MCF 10A (cell line): ENCODE measurements at regions of chr3 and their contacts with region 1.

Region 1: GRCh38 chr3:179108086-179108485 is 36.5 kb upstream of the ZMAT3 start:
- DNase-seq: no peak
- H3K4me3 Mint-ChIP-seq: no peak overlapping the region
- H3K27ac Mint-ChIP-seq: no peak overlapping the region
- H3K4me1 Mint-ChIP-seq: no peaks in the 10 kb centered on the region
- H3K27me3 Mint-ChIP-seq: no peaks in the 10 kb centered on the region
- CTCF ChIP-seq: no peak

Region 2: GRCh38 chr3:179083977-179084376 is 24.1 kb before region 1 on chr3:
- CTCF ChIA-PET with region 1: interaction called, 23 read pairs
- POLR2A ChIA-PET with region 1: no interaction called
- intact Hi-C with region 1: no loop called
- DNase-seq: no peak
- H3K4me3 Mint-ChIP-seq: no peak overlapping the region
- H3K27ac Mint-ChIP-seq: no peak overlapping the region
- H3K4me1 Mint-ChIP-seq: no peaks in the 10 kb centered on the region
- H3K27me3 Mint-ChIP-seq: no peaks in the 10 kb centered on the region
- CTCF ChIP-seq: no peak

Region 3: GRCh38 chr3:179272385-179272784 is 164.3 kb after region 1 on chr3:
- CTCF ChIA-PET with region 1: no interaction called
- POLR2A ChIA-PET with region 1: no interaction called
- intact Hi-C with region 1: loop called (anchors 2 kb)
- DNase-seq: peak; percentile 29
- H3K4me3 Mint-ChIP-seq: no peak overlapping the region
- H3K27ac Mint-ChIP-seq: no peak overlapping the region
- H3K4me1 Mint-ChIP-seq: no peaks in the 10 kb centered on the region
- H3K27me3 Mint-ChIP-seq: no peaks in the 10 kb centered on the region
- CTCF ChIP-seq: no peak

Region 4: DNA sequence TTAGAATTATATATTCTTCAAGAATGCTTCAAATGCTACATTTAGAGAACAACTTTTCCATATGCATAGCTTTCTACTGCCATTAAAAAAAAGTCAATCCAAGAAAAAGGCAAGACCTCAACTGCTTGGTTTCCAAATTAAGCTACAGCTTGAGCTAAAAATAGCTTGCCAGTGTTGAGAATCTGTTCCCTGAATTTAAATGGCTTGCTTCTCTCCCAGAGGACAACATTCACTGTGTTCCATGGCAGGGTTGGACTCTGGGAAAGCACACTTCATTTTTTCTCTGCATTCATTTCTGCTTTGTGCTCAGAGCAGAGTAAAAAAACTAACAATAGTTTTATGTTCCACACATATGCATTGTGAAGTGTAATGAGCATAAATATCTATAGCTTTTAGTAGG is 404.3 kb after region 1 on chr3:
- CTCF ChIA-PET with region 1: no interaction called
- POLR2A ChIA-PET with region 1: no interaction called
- intact Hi-C with region 1: no loop called
- DNase-seq: no peak
- H3K4me3 Mint-ChIP-seq: no peak overlapping the region
- H3K27ac Mint-ChIP-seq: no peak overlapping the region
- H3K4me1 Mint-ChIP-seq: no peaks in the 10 kb centered on the region
- H3K27me3 Mint-ChIP-seq: peaks cover 8% of the 10 kb centered on the region
- CTCF ChIP-seq: no peak

Region 5: DNA sequence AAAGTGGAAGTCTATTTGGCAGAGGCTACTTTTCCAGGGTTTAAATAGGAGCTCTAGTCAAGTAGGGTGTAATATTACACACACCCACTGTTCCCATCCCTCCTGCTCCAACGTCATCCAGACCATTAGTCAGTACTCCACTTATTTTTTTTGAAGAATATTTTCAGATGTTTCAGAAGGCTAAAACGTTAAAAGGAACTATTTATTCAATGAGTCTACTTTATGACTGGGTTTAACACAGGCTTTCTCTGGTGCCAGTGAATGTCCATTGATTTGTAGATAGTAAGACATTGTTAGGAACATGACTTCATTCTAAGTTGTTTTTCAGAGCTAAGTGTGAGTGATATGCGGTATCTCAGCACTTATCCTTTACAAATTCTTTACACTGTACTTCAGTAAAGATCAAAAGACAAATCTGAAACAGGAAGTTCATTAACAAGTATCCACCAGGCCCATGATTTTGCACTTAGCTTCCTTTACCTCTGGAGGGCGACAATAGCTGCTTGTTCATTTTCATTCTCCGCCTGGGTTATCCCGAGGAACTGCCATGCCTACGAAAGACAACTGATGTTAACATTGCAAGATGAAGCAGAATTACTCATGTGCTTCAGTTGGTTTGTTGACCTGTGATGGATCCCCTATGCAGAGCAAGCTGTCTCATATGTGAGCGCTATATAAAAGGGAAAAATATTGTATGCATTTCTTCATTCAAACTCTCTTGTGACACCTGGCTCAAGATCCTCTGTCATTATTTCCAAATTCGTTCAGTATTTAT is 703.4 kb after region 1 on chr3:
- CTCF ChIA-PET with region 1: no interaction called
- POLR2A ChIA-PET with region 1: no interaction called
- intact Hi-C with region 1: no loop called
- DNase-seq: peak; percentile 82
- H3K4me3 Mint-ChIP-seq: no peak overlapping the region
- H3K27ac Mint-ChIP-seq: peak overlapping the region; percentile 95
- H3K4me1 Mint-ChIP-seq: peaks cover 8% of the 10 kb centered on the region
- H3K27me3 Mint-ChIP-seq: no peaks in the 10 kb centered on the region
- CTCF ChIP-seq: peak; percentile 65